ENCODE measurements at regions of chr12 and their contacts with region 1.

Region 1: GRCh38 chr12:12474931-12475795 is 87.5 kb downstream of the DUSP16 start:
- DNase-seq: peak; percentile 76 to 82 (median 80)
- H3K4me3 ChIP-seq: peak overlapping the region; percentile 25 to 51
- H3K4me3 Mint-ChIP-seq: peak overlapping the region; percentile 67 to 89 (median 82)
- H3K27ac ChIP-seq: peak overlapping the region; percentile 81
- H3K27ac Mint-ChIP-seq: peak overlapping the region; percentile 91 to 99 (median 98)
- H3K4me1 ChIP-seq: peaks cover 64% of the 10 kb centered on the region
- H3K4me1 Mint-ChIP-seq: peaks cover 44 to 87% (median 65%) of the 10 kb centered on the region in 4 donors
- H3K27me3 ChIP-seq: no peaks in the 10 kb centered on the region
- H3K27me3 Mint-ChIP-seq: no peaks in the 10 kb centered on the region

Region 2: GRCh38 chr12:12384571-12385340 is 90.4 kb before region 1 on chr12:
- CTCF ChIA-PET with region 1: interaction called, 100 read pairs
- POLR2A ChIA-PET with region 1: interaction called, 111 read pairs
- intact Hi-C with region 1: loop called (anchors 1 kb)
- DNase-seq: peak in 4 of 5 donors; percentile 46 to 48 (median 47)
- H3K4me3 ChIP-seq: peak overlapping the region in 1 of 2 donors; percentile 9
- H3K4me3 Mint-ChIP-seq: peak overlapping the region; percentile 59 to 85 (median 74)
- H3K27ac ChIP-seq: peak overlapping the region; percentile 50
- H3K27ac Mint-ChIP-seq: peak overlapping the region; percentile 86 to 99 (median 96)
- H3K4me1 ChIP-seq: peaks cover 87% of the 10 kb centered on the region
- H3K4me1 Mint-ChIP-seq: peaks cover 46 to 87% (median 68%) of the 10 kb centered on the region in 4 donors
- H3K27me3 ChIP-seq: no peaks in the 10 kb centered on the region
- H3K27me3 Mint-ChIP-seq: no peaks in the 10 kb centered on the region

Region 3: GRCh38 chr12:12432364-12432763 is 42.8 kb before region 1 on chr12:
- CTCF ChIA-PET with region 1: interaction called, 63 read pairs
- POLR2A ChIA-PET with region 1: interaction called, 13 read pairs
- intact Hi-C with region 1: no loop called
- DNase-seq: no peak
- H3K4me3 ChIP-seq: no peak overlapping the region
- H3K4me3 Mint-ChIP-seq: peak overlapping the region in 6 of 8 donors; percentile 6 to 82 (median 45)
- H3K27ac ChIP-seq: no peak overlapping the region
- H3K27ac Mint-ChIP-seq: peak overlapping the region in 5 of 7 donors; percentile 15 to 84 (median 60)
- H3K4me1 ChIP-seq: peaks cover 59% of the 10 kb centered on the region
- H3K4me1 Mint-ChIP-seq: peaks cover 45 to 90% (median 56%) of the 10 kb centered on the region in 4 donors
- H3K27me3 ChIP-seq: no peaks in the 10 kb centered on the region
- H3K27me3 Mint-ChIP-seq: no peaks in the 10 kb centered on the region

Region 4: DNA sequence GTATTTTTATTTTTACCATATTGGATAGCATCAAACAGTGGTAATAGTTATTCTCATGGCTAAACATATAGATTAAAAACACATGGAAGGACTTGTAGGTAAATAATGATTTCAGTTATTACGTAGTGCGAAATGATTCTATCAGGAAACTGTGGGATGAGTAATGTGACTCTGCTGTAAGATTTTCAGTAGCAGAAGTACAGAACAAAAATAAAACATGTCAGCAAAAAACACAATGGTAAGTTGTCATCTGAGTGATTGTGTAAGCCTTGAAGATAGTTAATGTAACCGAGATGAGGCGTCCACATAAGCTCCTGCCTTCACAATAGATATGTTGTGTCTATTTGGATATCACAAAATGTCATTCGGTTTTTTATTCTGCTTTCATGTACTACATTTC is 18.5 kb before region 1 on chr12:
- CTCF ChIA-PET with region 1: interaction called, 48 read pairs
- POLR2A ChIA-PET with region 1: interaction called, 970 read pairs
- intact Hi-C with region 1: loop called (anchors 2 kb)
- DNase-seq: peak in 4 of 5 donors; percentile 54 to 72 (median 54)
- H3K4me3 ChIP-seq: peak overlapping the region in 1 of 2 donors; percentile 27
- H3K4me3 Mint-ChIP-seq: peak overlapping the region; percentile 23 to 78 (median 66)
- H3K27ac ChIP-seq: peak overlapping the region; percentile 65
- H3K27ac Mint-ChIP-seq: peak overlapping the region; percentile 78 to 97 (median 92)
- H3K4me1 ChIP-seq: peaks cover 40% of the 10 kb centered on the region
- H3K4me1 Mint-ChIP-seq: peaks cover 21 to 60% (median 45%) of the 10 kb centered on the region in 4 donors
- H3K27me3 ChIP-seq: no peaks in the 10 kb centered on the region
- H3K27me3 Mint-ChIP-seq: no peaks in the 10 kb centered on the region

Region 5: DNA sequence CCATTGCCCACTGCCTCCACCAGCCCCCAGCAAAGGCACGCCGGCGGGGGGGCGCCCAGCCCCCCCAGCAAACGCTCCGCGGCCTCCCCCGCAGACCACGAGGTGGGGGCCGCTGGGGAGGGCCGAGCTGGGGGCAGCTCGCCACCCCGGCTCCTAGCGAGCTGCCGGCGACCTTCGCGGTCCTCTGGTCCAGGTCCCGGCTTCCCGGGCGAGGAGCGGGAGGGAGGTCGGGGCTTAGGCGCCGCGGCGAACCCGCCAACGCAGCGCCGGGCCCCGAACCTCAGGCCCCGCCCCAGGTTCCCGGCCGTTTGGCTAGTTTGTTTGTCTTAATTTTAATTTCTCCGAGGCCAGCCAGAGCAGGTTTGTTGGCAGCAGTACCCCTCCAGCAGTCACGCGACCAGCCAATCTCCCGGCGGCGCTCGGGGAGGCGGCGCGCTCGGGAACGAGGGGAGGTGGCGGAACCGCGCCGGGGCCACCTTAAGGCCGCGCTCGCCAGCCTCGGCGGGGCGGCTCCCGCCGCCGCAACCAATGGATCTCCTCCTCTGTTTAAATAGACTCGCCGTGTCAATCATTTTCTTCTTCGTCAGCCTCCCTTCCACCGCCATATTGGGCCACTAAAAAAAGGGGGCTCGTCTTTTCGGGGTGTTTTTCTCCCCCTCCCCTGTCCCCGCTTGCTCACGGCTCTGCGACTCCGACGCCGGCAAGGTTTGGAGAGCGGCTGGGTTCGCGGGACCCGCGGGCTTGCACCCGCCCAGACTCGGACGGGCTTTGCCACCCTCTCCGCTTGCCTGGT is 241.8 kb after region 1 on chr12 and contains the start of gene CDKN1B:
- CTCF ChIA-PET with region 1: interaction called, 3 read pairs
- POLR2A ChIA-PET with region 1: interaction called, 238 read pairs
- intact Hi-C with region 1: no loop called
- DNase-seq: peak; percentile 87 to 90 (median 89)
- H3K4me3 ChIP-seq: peak within 1 kb of the TSS; percentile 94 to 99
- H3K4me3 Mint-ChIP-seq: peak within 1 kb of the TSS; percentile 96 to 100 (median 98)
- H3K27ac ChIP-seq: peak within 1 kb of the TSS; percentile 95
- H3K27ac Mint-ChIP-seq: peak within 1 kb of the TSS; percentile 96 to 99 (median 98)
- H3K4me1 ChIP-seq: peaks cover 51% of the 10 kb centered on the region
- H3K4me1 Mint-ChIP-seq: peaks cover 38 to 63% (median 47%) of the 10 kb centered on the region in 4 donors
- H3K27me3 ChIP-seq: no peaks in the 10 kb centered on the region
- H3K27me3 Mint-ChIP-seq: no peaks in the 10 kb centered on the region
- total RNA-seq, gene CDKN1B: 232 to 238 TPM

Region 6: GRCh38 chr12:13033476-13033875 is 558.3 kb after region 1 on chr12:
- CTCF ChIA-PET with region 1: no interaction called
- POLR2A ChIA-PET with region 1: no interaction called
- intact Hi-C with region 1: no loop called
- DNase-seq: no peak
- H3K4me3 ChIP-seq: no peak overlapping the region
- H3K4me3 Mint-ChIP-seq: no peak overlapping the region
- H3K27ac ChIP-seq: no peak overlapping the region
- H3K27ac Mint-ChIP-seq: no peak overlapping the region
- H3K4me1 ChIP-seq: no peaks in the 10 kb centered on the region
- H3K4me1 Mint-ChIP-seq: no peaks in the 10 kb centered on the region
- H3K27me3 ChIP-seq: no peaks in the 10 kb centered on the region
- H3K27me3 Mint-ChIP-seq: peaks cover 3 to 6% of the 10 kb centered on the region in 2 donors

Measured in CD4-positive, alpha-beta memory T cell (primary cell).